Common myeloid progenitor, CD34-positive (primary cell): ENCODE measurements at regions of chr17 and their contacts with region 1.

Region 1: GRCh38 chr17:39352511-39352910 is 48.9 kb downstream of the FBXL20 start:
- DNase-seq: peak; percentile 10 to 21 (median 18)
- H3K4me3 ChIP-seq: no peak overlapping the region
- H3K27ac ChIP-seq: no peak overlapping the region
- H3K4me1 ChIP-seq: peaks cover 0 to 4% (median 2%) of the 10 kb centered on the region in 4 experiments
- H3K27me3 ChIP-seq: no peaks in the 10 kb centered on the region

Region 2: GRCh38 chr17:39270923-39271322 is 81.6 kb before region 1 on chr17:
- CTCF ChIA-PET with region 1: interaction called, 10 read pairs
- POLR2A ChIA-PET with region 1: no interaction called
- DNase-seq: peak; percentile 62 to 79 (median 78)
- H3K4me3 ChIP-seq: no peak overlapping the region
- H3K27ac ChIP-seq: no peak overlapping the region
- H3K4me1 ChIP-seq: no peaks in the 10 kb centered on the region
- H3K27me3 ChIP-seq: no peaks in the 10 kb centered on the region

Region 3: DNA sequence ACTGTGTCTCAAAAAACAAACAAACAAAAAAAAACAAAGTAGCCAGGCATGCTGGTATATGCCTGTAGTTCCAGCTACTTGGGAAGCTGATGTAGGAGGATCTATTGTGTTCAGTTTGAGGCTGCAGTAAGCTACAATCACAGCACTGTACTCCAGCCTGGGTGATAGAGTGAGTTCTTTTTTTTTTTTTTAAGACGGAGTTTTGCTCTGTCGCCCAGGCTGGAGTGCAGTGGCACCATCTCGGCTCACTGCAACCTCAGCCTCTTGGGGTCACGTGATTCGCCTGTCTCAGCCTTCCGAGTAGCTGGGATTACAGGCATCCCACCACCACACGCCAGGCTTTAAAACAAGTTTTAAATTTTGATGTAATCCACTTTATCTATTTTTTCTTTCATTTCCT is 46.5 kb before region 1 on chr17:
- CTCF ChIA-PET with region 1: interaction called, 10 read pairs
- POLR2A ChIA-PET with region 1: no interaction called
- DNase-seq: no peak
- H3K4me3 ChIP-seq: no peak overlapping the region
- H3K27ac ChIP-seq: no peak overlapping the region
- H3K4me1 ChIP-seq: no peaks in the 10 kb centered on the region
- H3K27me3 ChIP-seq: no peaks in the 10 kb centered on the region

Region 4: DNA sequence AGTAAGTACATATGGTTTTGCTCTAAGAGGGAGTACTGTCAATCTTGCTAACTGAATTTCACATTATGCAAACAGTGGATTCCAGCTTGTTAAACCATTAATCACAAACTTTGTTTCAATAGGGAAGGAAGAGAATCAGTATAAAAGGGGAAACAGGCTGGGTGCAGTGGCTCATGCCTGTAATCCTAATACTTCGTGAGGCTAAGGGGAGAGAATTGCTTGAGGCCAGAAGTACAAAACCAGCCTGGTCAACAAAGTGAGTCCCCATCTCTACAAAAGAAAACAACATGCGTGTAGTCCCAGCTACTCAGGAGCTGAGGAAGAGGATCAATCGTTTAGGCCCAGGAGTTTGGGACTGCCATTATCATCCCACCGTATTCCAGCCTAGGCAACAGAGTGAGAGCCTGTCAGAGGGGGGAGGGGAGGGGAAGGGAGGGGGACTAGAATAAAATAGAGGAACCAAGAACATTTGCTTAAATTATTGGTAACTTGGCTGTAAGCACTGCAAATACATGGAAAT is 16.7 kb before region 1 on chr17:
- CTCF ChIA-PET with region 1: interaction called, 17 read pairs
- POLR2A ChIA-PET with region 1: interaction called, 4 read pairs
- DNase-seq: peak; percentile 26 to 73 (median 66)
- H3K4me3 ChIP-seq: peak overlapping the region in 3 of 7 experiments; percentile 0 to 23 (median 3)
- H3K27ac ChIP-seq: peak overlapping the region; percentile 50 to 82
- H3K4me1 ChIP-seq: peaks cover 13 to 29% (median 26%) of the 10 kb centered on the region in 4 experiments
- H3K27me3 ChIP-seq: no peaks in the 10 kb centered on the region